H1 (cell line): ENCODE measurements at regions of chr1 and their contacts with region 1.

Region 1: DNA sequence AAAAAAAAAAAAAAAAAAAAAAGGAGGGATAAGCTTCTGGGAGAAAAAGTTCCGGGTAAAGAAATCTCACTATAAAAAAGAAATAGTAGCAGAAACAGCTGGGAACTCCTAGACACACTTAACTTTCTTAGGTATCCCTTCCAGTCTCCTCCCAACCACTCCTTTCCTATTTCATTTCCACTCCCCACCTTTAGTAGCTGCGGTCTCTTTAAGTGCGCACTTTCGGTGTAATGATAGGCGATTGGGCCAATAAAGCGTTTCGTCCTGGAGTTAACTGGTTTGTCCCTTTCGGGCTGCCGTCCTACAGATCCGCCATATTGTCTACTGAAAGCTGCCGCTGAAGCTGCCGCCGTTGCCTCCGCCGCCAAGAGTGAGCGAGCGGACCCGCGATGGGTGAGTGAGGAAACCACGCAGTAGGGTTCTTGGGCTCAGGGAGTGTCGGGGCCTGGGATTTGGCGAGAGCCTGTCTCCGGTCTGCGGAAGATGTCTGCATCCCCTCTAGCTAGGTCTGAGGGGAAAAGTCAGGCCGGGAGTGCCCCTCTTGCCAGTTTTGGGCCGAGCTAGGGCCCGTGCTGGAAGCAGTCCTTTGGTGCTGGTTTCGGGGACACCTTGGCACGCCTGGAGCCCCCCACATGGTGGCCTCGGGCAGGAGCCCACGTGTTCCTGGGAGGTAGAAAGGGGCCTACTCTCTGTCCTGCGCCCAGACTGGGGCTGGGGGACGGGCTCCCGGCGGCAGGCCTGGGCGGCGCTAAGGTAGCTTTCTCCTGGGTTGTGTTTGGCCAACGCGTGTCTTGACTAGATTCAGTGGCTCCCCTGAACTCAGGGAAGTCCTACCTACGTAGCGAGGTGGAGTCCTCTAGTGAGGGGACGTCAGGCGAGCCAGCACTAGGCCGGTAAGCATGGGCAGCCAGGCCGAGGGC is at the start of gene KPNA6:
- DNase-seq: peak; percentile 77 to 94
- H3K4me3 ChIP-seq: peak within 1 kb of the TSS; percentile 89 to 100 (median 97)
- H3K27ac ChIP-seq: peak within 1 kb of the TSS; percentile 89
- H3K4me1 ChIP-seq: peaks cover 0 to 1% (median 0%) of the 10 kb centered on the region in 4 experiments; a peak in 1 of 7 replicates
- H3K27me3 ChIP-seq: no peaks in the 10 kb centered on the region
- CTCF ChIP-seq: 0 out of 4 replicates have a peak, but pooled peaks of 1 of the 3 experiments have one; percentile 3
- EP300 ChIP-seq: peak in 1 of 2 experiments; percentile 16; a peak in 1 of 3 replicates
- POLR2A ChIP-seq: peak in 1 of 2 experiments; percentile 78; a peak in 2 of 3 replicates
- RAD21 ChIP-seq: no peak
- total RNA-seq, gene KPNA6: 116 and 120 TPM in 2 replicates

Region 2: GRCh38 chr1:32122151-32122550 is 14.1 kb after region 1 on chr1:
- CTCF ChIA-PET with region 1: interaction called, 13 read pairs
- POLR2A ChIA-PET with region 1: interaction called, 21 read pairs
- DNase-seq: no peak
- H3K4me3 ChIP-seq: no peak overlapping the region
- H3K27ac ChIP-seq: no peak overlapping the region
- H3K4me1 ChIP-seq: no peaks in the 10 kb centered on the region; a peak in 1 of 7 replicates
- H3K27me3 ChIP-seq: no peaks in the 10 kb centered on the region
- CTCF ChIP-seq: no peak
- EP300 ChIP-seq: no peak
- POLR2A ChIP-seq: no peak
- RAD21 ChIP-seq: no peak

Region 3: GRCh38 chr1:32179443-32180185 is 71.6 kb after region 1 on chr1 and contains the start of gene TXLNA:
- CTCF ChIA-PET with region 1: interaction called, 4 read pairs
- POLR2A ChIA-PET with region 1: interaction called, 12 read pairs
- DNase-seq: peak; percentile 77 to 95
- H3K4me3 ChIP-seq: peak within 1 kb of the TSS; percentile 44 to 89 (median 76)
- H3K27ac ChIP-seq: peak within 1 kb of the TSS; percentile 69; the same call in 1 of the 2 replicates
- H3K4me1 ChIP-seq: peaks cover 8 to 15% (median 10%) of the 10 kb centered on the region in 4 experiments; a peak in 6 of 7 replicates
- H3K27me3 ChIP-seq: no peaks in the 10 kb centered on the region
- CTCF ChIP-seq: no peak
- EP300 ChIP-seq: no peak
- POLR2A ChIP-seq: peak; percentile 58 to 86
- RAD21 ChIP-seq: no peak
- total RNA-seq, gene TXLNA: 45.4 and 46.9 TPM in 2 replicates